Activated T-helper 1 cell treated with anti-CD3 and anti-CD28 coated beads, Interleukin-12 subunit alpha, Interleukin-12 subunit beta, Interleukin-2, Interleukin-4 antibody, amounts not matched to agents 30 ng/mL and 10 ng/mL and 1 ng/mL, durations not matched to agents 14 hours and 24 hours and 36 hours (primary cell): ENCODE measurements at regions of chr21 and their contacts with region 1.

Region 1: DNA sequence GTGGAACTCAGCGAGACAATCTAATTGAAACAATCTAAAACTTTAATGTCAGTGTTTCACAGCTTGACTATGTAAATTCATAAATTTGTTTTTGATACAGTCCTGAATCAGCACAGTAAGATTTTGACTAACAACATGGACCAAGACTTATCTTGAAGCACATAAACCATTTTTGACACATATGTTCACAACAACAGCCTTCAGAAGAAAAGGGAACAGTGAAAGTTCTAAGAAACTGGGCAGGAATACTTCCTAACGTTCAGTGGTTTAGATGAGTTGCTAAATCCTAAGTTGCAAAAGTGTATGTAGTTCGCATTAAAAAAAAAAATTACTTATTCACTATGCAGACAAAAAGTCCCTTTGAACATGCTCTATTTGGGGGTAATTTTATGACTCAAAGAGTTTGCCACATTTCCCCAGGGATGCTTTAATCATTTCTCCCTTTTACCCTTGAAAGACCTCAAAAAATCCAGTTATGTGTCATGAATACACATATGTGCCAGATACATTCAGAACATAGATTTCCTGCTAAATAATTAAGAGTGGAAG is 120.2 kb downstream of the MRPL39 start:
- DNase-seq: no peak
- H3K4me3 Mint-ChIP-seq: peak overlapping the region; percentile 47
- H3K27ac Mint-ChIP-seq: peak overlapping the region; percentile 85
- H3K4me1 Mint-ChIP-seq: peaks cover 60% of the 10 kb centered on the region
- H3K27me3 Mint-ChIP-seq: no peaks in the 10 kb centered on the region

Region 2: GRCh38 chr21:25428537-25428936 is 58.6 kb before region 1 on chr21:
- intact Hi-C with region 1: loop called (anchors 2 kb)
- DNase-seq: no peak
- H3K4me3 Mint-ChIP-seq: no peak overlapping the region
- H3K27ac Mint-ChIP-seq: peak overlapping the region; percentile 30
- H3K4me1 Mint-ChIP-seq: peaks cover 46% of the 10 kb centered on the region
- H3K27me3 Mint-ChIP-seq: no peaks in the 10 kb centered on the region

Region 3: DNA sequence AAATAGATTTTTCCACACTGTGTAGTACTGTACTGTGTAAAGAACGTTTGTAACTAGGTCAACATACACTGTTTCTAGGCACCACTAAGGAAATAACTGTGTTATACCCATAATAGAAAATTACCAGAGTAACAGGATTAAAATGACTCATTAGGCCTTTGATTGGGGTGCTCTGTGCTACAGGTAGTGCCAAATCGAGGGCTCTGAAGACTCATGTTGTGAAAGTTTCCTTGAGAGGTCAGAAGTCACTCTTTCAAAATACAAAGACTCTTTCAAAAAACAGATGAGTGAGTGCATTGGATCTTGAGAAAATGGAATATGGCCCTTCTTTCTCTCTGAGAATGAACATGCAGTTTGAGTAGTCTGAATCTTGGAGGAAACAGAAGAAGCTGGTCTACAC is 22.8 kb before region 1 on chr21:
- intact Hi-C with region 1: loop called (anchors 1 kb)
- DNase-seq: no peak
- H3K4me3 Mint-ChIP-seq: peak overlapping the region; percentile 58
- H3K27ac Mint-ChIP-seq: peak overlapping the region; percentile 90
- H3K4me1 Mint-ChIP-seq: peaks cover 62% of the 10 kb centered on the region
- H3K27me3 Mint-ChIP-seq: no peaks in the 10 kb centered on the region

Region 4: GRCh38 chr21:25509862-25510261 is 22.7 kb after region 1 on chr21:
- intact Hi-C with region 1: loop called (anchors 1 kb)
- DNase-seq: no peak
- H3K4me3 Mint-ChIP-seq: no peak overlapping the region
- H3K27ac Mint-ChIP-seq: peak overlapping the region; percentile 13
- H3K4me1 Mint-ChIP-seq: peaks cover 42% of the 10 kb centered on the region
- H3K27me3 Mint-ChIP-seq: no peaks in the 10 kb centered on the region